ENCODE measurements at regions of chr1 and their contacts with region 1.

Region 1: DNA sequence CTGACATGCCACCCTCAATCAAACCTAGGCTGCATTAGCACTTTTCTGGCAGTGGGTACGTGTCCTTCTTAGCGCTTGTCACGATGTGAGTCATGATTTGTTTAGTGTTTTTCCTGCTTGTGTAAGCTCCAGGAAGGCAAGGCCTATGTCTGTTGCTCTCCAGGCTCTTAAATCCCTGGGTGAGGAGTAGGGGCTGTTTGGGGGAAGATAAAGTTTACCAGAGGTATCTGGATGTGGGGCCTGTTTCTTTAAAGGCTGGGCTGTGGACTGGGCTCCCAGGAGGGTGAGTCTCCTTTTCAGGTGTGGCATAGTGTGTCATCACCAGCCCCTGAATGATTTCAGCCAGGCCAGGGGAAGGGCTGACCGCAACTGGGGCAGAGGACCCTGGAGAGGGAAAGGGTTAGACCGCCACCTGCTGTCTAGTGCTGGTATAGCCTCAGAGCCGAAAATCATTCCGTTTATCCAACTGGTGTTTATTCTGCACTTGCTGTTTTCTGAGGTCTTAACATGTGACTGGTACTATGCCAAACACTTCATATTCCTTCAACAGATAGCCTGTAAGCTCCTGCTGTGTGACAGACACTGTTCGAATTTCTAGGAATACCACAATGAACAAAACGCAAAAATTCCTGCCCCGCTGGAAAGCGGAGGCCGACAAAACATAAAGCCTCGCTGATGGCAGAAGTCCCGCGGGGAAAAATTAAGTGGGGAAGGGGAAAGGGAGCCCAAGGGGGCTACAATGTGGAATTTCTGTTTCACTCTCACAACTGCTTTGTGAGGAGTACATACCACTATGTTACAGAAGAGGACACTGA is 9.7 kb downstream of the SERINC2 start:
- DNase-seq: peak; percentile 89
- H3K4me3 ChIP-seq: no peak overlapping the region; a peak in 1 of 4 replicates
- H3K27ac ChIP-seq: 0 out of 4 replicates have a peak overlapping the region, but pooled peaks of 1 of the 2 experiments have one; percentile 19
- H3K4me1 ChIP-seq: no peaks in the 10 kb centered on the region; a peak in 1 of 4 replicates
- H3K27me3 ChIP-seq: no peaks in the 10 kb centered on the region
- CTCF ChIP-seq: peak; percentile 95
- EP300 ChIP-seq: no peak
- RAD21 ChIP-seq: peak; percentile 98

Region 2: DNA sequence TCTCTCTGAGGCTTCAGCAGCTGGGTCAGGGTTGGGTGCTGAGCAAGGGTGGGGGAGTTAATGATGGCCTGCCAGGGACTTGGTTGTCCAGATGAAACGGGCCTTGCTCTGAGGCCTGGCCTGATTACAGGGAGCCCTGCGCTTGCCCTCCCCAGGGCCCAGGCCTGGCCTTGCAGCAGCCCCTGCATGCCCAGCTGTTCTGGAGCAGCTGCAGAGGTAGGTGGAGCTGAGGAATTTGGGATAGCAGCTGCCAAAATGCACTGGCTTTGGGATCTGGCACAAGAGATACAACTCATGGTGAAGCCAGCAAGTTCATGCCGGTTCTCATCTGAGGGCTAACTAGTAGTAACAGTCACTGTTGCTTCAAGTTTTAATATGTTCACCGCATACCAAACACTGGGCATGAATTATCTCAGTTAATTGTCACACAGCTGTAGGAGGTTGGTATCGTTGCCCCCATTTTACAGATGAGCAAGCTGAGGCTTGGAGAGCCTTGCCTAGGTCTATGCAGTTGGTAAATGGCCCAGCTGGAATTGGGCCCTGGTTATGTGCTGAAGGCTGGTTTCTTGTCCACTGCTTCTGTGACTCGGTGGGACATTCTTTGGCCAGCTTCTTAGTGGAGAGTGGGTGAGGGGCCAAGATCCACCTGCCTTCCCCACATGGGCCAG is 17.0 kb before region 1 on chr1:
- CTCF ChIA-PET with region 1: interaction called, 287 read pairs
- POLR2A ChIA-PET with region 1: no interaction called
- DNase-seq: no peak
- H3K4me3 ChIP-seq: no peak overlapping the region
- H3K27ac ChIP-seq: no peak overlapping the region
- H3K4me1 ChIP-seq: no peaks in the 10 kb centered on the region
- H3K27me3 ChIP-seq: no peaks in the 10 kb centered on the region
- CTCF ChIP-seq: no peak
- EP300 ChIP-seq: no peak
- RAD21 ChIP-seq: no peak

Region 3: GRCh38 chr1:31434171-31434871 is 11.6 kb after region 1 on chr1:
- CTCF ChIA-PET with region 1: interaction called, 18 read pairs
- POLR2A ChIA-PET with region 1: no interaction called
- DNase-seq: no peak
- H3K4me3 ChIP-seq: no peak overlapping the region
- H3K27ac ChIP-seq: no peak overlapping the region
- H3K4me1 ChIP-seq: no peaks in the 10 kb centered on the region
- H3K27me3 ChIP-seq: no peaks in the 10 kb centered on the region
- CTCF ChIP-seq: no peak
- EP300 ChIP-seq: no peak
- RAD21 ChIP-seq: no peak

Region 4: GRCh38 chr1:31531177-31531999 is 108.7 kb after region 1 on chr1:
- CTCF ChIA-PET with region 1: interaction called, 19 read pairs
- POLR2A ChIA-PET with region 1: no interaction called
- DNase-seq: peak; percentile 66
- H3K4me3 ChIP-seq: peak overlapping the region in 1 of 2 experiments; percentile 5; a peak in 1 of 4 replicates
- H3K27ac ChIP-seq: peak overlapping the region; percentile 53 to 96
- H3K4me1 ChIP-seq: peaks cover 13 to 20% of the 10 kb centered on the region in 2 experiments; a peak in 3 of 4 replicates
- H3K27me3 ChIP-seq: no peaks in the 10 kb centered on the region
- CTCF ChIP-seq: no peak
- EP300 ChIP-seq: peak in 1 of 2 experiments; percentile 48; a peak in 1 of 4 replicates
- RAD21 ChIP-seq: no peak

Measured in SK-N-SH (cell line).